ENCODE measurements at regions of chr17 and their contacts with region 1.

Region 1: DNA sequence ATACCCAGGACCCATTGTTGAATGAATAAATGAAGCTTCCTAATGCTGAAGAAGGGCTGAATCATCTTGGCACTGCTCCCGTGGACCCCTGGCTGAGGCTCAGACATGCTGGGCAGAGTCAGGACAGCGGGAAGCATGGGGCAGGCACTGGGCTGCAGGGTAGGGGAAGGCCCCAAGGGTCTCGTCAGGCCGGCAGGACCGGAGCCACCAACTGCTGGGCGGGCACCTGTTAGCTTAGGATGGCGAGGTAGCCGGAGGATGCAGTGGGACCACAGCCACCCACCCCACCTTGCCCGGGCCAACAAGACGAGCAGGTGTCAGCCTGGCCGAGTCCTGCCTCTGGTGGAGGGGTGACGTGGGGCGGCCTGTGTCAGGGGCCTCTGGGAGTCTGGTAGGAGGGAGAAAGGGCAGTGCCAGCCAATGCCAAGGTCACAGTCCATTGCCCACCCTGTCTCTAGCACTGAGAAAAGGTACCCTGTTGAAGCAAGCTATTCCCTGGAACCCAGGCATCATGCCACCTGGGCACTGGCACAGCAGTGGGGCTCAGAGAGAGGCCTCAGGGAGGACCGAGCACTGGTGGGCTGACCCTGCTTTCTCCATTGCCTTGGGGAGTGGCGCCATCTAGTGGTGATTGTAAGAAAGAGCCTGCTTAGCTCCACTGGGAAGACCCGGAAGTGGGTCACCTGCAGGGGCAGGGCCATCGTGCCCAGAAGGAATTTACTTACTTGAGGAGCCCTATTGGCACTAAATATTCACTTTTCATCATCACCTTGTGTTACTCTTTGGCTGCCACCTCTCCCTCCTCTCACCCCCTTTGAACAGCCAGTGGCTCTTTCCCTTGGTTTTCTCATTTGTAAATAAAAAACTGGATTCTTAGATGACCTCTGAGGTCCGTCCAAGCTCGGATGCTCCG is 3.0 kb upstream of the DLX3 start:
- DNase-seq: peak; percentile 95
- H3K4me3 Mint-ChIP-seq: peak overlapping the region; percentile 57
- H3K27ac Mint-ChIP-seq: no peak overlapping the region
- H3K4me1 Mint-ChIP-seq: peaks cover 33% of the 10 kb centered on the region
- H3K27me3 Mint-ChIP-seq: peaks cover 84% of the 10 kb centered on the region
- CTCF ChIP-seq: peak; percentile 98

Region 2: GRCh38 chr17:49707608-49708514 is 290.2 kb before region 1 on chr17 and contains the start of gene SLC35B1:
- CTCF ChIA-PET with region 1: interaction called, 10 read pairs
- intact Hi-C with region 1: loop called (anchors 5 kb)
- DNase-seq: peak; percentile 100
- H3K4me3 Mint-ChIP-seq: peak within 1 kb of the TSS; percentile 96
- H3K27ac Mint-ChIP-seq: peak within 1 kb of the TSS; percentile 99
- H3K4me1 Mint-ChIP-seq: peaks cover 37% of the 10 kb centered on the region
- H3K27me3 Mint-ChIP-seq: no peaks in the 10 kb centered on the region
- CTCF ChIP-seq: peak; percentile 87
- total RNA-seq, gene SLC35B1: 117 and 127 TPM in 2 replicates

Region 3: GRCh38 chr17:49880291-49881053 is 117.6 kb before region 1 on chr17:
- CTCF ChIA-PET with region 1: interaction called, 27 read pairs
- intact Hi-C with region 1: loop called (anchors 1 kb)
- DNase-seq: peak; percentile 95
- H3K4me3 Mint-ChIP-seq: peak overlapping the region; percentile 31
- H3K27ac Mint-ChIP-seq: no peak overlapping the region
- H3K4me1 Mint-ChIP-seq: peaks cover 9% of the 10 kb centered on the region
- H3K27me3 Mint-ChIP-seq: peaks cover 52% of the 10 kb centered on the region
- CTCF ChIP-seq: peak; percentile 99

Region 4: DNA sequence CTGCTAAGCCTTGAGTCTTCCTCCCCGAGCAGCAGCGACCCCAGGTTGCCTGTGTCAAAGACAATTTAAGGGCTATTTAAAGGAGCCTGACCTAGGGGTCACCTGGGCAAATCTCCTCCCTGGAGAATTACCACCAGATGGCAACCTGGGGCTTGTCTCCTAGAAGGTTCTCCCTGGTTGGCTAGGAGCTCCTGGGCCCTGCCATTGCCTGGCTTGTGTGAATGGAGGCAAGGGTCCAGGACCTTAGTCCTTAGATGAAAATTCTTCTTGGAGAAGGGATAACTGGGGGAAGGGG is 98.9 kb before region 1 on chr17:
- CTCF ChIA-PET with region 1: interaction called, 34 read pairs
- intact Hi-C with region 1: no loop called
- DNase-seq: peak; percentile 50
- H3K4me3 Mint-ChIP-seq: no peak overlapping the region
- H3K27ac Mint-ChIP-seq: no peak overlapping the region
- H3K4me1 Mint-ChIP-seq: peaks cover 34% of the 10 kb centered on the region
- H3K27me3 Mint-ChIP-seq: peaks cover 19% of the 10 kb centered on the region
- CTCF ChIP-seq: peak; percentile 42

Region 5: GRCh38 chr17:49976163-49976827 is 21.8 kb before region 1 on chr17:
- CTCF ChIA-PET with region 1: interaction called, 14 read pairs
- intact Hi-C with region 1: no loop called
- DNase-seq: no peak
- H3K4me3 Mint-ChIP-seq: no peak overlapping the region
- H3K27ac Mint-ChIP-seq: no peak overlapping the region
- H3K4me1 Mint-ChIP-seq: peaks cover 16% of the 10 kb centered on the region
- H3K27me3 Mint-ChIP-seq: peaks cover 100% of the 10 kb centered on the region
- CTCF ChIP-seq: no peak

Measured in Calu3 (cell line).